K562 (cell line): ENCODE measurements at regions of chr11 and their contacts with region 1.

Region 1: GRCh38 chr11:8566613-8567210 is 27.3 kb downstream of the STK33 start:
- DNase-seq: peak; percentile 6 to 41 (median 11)
- ATAC-seq: peak; percentile 84
- H3K4me3 ChIP-seq: no peak overlapping the region
- H3K27ac ChIP-seq: no peak overlapping the region
- H3K4me1 ChIP-seq: no peaks in the 10 kb centered on the region
- H3K27me3 ChIP-seq: no peaks in the 10 kb centered on the region; a peak in 1 of 5 replicates
- CTCF ChIP-seq: peak; percentile 28 to 82 (median 47); a peak in 4 of 6 replicates
- EP300 ChIP-seq: no peak
- POLR2A ChIP-seq: no peak
- RAD21 ChIP-seq: peak; percentile 75 to 84

Region 2: GRCh38 chr11:8225589-8226036 is 341.1 kb before region 1 on chr11:
- CTCF ChIA-PET with region 1: interaction called, 10 read pairs
- POLR2A ChIA-PET with region 1: no interaction called
- in situ Hi-C with region 1: loop called (anchors 10 kb)
- intact Hi-C with region 1: loop called (anchors 1 kb)
- DNase-seq: peak; percentile 72 to 91 (median 86)
- ATAC-seq: peak; percentile 90
- H3K4me3 ChIP-seq: no peak overlapping the region
- H3K27ac ChIP-seq: no peak overlapping the region
- H3K4me1 ChIP-seq: no peaks in the 10 kb centered on the region
- H3K27me3 ChIP-seq: peaks cover 8 to 58% of the 10 kb centered on the region in 2 experiments; a peak in 4 of 5 replicates
- CTCF ChIP-seq: peak; percentile 82 to 87 (median 82)
- EP300 ChIP-seq: no peak
- POLR2A ChIP-seq: no peak
- RAD21 ChIP-seq: peak; percentile 69 to 80

Region 3: DNA sequence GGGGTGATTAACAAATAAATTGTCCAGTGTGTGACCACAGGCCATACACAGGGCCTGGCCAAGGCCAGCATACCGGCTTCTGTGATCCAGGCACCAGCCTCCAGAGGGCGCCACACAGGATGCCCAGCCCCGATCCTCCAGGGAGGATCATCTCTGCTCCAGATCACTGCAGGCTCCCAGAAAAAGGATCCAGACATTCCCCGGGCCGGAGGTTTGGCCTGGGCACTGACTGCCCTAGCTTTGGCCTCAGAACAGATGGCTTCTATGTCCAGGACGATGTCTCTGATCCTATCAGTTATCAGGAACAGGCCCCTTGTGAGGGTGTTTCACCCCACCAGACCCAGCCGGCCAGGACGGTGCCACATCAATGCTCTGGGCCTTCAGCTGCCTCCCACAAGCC is 228.6 kb before region 1 on chr11:
- CTCF ChIA-PET with region 1: interaction called, 4 read pairs
- POLR2A ChIA-PET with region 1: no interaction called
- in situ Hi-C with region 1: no loop called
- intact Hi-C with region 1: loop called (anchors 1 kb)
- DNase-seq: peak; percentile 60 to 82 (median 78)
- ATAC-seq: peak; percentile 95
- H3K4me3 ChIP-seq: no peak overlapping the region
- H3K27ac ChIP-seq: no peak overlapping the region
- H3K4me1 ChIP-seq: peaks cover 0 to 3% of the 10 kb centered on the region in 2 experiments; a peak in 2 of 5 replicates
- H3K27me3 ChIP-seq: peaks cover 3 to 62% of the 10 kb centered on the region in 2 experiments
- CTCF ChIP-seq: peak; percentile 69 to 83 (median 72)
- EP300 ChIP-seq: no peak
- POLR2A ChIP-seq: no peak
- RAD21 ChIP-seq: peak in 1 of 2 experiments; percentile 51; a peak in 3 of 4 replicates

Region 4: DNA sequence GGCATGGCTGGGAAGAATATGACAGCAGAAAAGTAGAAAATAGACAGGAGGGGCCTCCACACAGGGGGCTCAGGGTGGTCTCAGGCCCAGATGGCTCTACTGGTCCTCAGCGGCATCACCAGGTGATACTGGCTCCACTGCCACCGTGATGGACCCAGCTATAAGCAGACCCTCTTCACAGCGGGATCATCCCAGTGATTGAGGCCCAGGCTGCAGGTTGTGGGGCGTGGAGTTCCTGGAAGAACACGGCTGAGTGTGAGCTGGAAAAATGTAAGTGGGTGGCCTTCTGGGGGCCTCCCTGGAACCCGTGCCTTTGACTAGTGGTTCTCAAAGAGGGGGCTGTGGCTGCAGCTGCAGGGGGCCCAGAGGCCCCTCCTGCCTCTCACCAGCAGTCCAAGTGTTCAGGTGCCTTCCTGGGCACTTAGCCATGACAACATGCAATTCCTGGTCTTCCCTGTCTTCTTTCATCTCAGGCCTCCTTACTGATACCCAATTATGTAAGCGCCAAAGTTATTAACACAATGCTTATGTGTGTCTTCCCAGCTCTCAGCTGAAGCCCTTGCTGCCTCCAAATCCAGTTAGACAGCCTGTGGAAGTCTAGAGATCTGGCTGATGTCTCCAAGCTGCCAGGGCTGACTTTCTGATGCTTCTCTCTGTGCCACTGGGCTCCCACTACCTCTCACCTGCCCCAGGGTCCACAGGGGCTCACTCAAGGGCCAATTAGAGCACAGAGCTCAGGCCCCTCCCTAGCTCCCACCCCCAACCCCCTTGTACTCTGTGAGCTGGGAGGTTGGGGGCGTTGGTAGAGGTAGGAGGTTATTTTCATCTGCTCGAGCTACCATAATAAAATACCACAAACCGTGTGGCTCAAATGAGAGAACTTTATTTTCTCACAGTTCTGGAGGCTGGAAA is 192.9 kb before region 1 on chr11:
- CTCF ChIA-PET with region 1: no interaction called
- POLR2A ChIA-PET with region 1: no interaction called
- in situ Hi-C with region 1: no loop called
- intact Hi-C with region 1: no loop called
- DNase-seq: no peak
- ATAC-seq: no peak
- H3K4me3 ChIP-seq: no peak overlapping the region
- H3K27ac ChIP-seq: no peak overlapping the region
- H3K4me1 ChIP-seq: no peaks in the 10 kb centered on the region
- H3K27me3 ChIP-seq: no peaks in the 10 kb centered on the region; a peak in 2 of 5 replicates
- CTCF ChIP-seq: no peak
- EP300 ChIP-seq: no peak
- POLR2A ChIP-seq: no peak
- RAD21 ChIP-seq: no peak